GM18951 (cell line): ENCODE measurements at regions of chr6 and their contacts with region 1.

Region 1: DNA sequence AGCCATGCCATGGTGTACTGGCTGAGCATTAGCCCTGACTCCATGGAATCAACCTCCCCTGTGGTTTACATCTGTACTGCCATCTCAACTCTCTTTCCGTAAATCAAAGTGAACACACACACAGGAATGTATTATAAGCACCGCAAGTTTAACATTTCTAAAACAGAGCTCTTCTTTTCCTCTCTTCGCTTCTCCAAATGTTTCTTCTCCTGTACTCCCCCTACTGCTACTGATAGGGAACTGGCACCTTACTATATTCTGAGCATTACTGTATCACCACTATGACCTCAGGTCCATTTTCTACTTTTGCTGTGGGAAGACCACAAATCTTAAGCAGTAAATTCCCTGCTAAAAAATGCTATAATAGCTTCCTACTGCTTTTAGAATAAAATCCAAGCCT is 101.2 kb downstream of the NUS1 start:
- POLR2A ChIP-seq: no peak

Region 2: GRCh38 chr6:117681162-117681741 is 95.2 kb before region 1 on chr6:
- in situ Hi-C with region 1: loop called (anchors 5 kb)
- POLR2A ChIP-seq: no peak